ENCODE measurements at regions of chr10 and their contacts with region 1.

Region 1: GRCh38 chr10:72331601-72332422 is 22.9 kb downstream of the DNAJB12 start:
- DNase-seq: peak; percentile 67 to 78
- ATAC-seq: peak; percentile 2 to 33
- H3K4me3 ChIP-seq: peak overlapping the region in 1 of 4 donors; percentile 1
- H3K27ac ChIP-seq: peak overlapping the region; percentile 85 to 95 (median 90)
- H3K4me1 ChIP-seq: peaks cover 73 to 76% of the 10 kb centered on the region in 2 donors
- H3K27me3 ChIP-seq: no peaks in the 10 kb centered on the region
- CTCF ChIP-seq: peak in 3 of 5 experiments; percentile 28 to 38 (median 35)
- POLR2A ChIP-seq: peak; percentile 13 to 39

Region 2: DNA sequence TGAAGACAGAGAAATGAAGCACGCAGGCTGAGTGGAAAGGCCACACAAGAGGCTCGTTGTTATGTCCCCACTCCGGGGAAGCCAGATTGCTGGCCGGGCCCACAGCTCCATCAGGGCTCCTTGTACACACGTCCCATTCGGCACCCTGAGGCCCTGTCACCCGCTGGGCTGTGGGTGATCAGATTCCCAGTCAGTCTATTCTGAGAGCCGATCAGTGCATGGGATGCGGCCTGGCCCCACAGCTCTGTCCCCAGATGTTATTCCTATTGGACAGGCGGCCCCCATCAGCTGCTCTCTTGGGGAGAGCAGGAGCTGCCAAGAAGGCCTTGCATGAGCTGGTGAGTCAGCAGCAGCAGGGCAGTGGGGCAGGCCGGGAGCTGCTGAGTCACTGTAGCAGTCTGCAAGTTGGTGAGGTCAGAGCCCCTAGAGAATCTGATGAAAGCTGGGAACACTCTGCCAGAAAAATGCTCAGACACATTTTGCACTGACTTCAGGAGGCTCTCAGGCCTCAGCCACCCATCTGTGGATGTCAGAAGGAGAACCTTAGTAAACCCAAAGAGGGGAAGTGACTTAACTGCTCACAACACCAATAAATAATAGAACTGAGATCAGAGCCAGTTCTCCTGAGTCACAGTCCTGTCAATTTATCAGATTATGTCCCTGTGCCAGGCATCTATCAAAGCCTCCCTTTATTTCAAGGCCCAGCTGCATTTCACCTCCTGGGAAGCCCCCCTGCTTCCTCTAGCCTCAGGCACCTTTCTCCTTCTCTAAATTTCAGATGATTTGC is 471.4 kb before region 1 on chr10:
- in situ Hi-C with region 1: no loop called
- intact Hi-C with region 1: no loop called
- DNase-seq: peak; percentile 99 to 100
- ATAC-seq: peak; percentile 91 to 93
- H3K4me3 ChIP-seq: peak overlapping the region in 2 of 4 donors; percentile 13 to 30
- H3K27ac ChIP-seq: peak overlapping the region; percentile 89 to 99 (median 97)
- H3K4me1 ChIP-seq: peaks cover 23 to 24% of the 10 kb centered on the region in 2 donors
- H3K27me3 ChIP-seq: no peaks in the 10 kb centered on the region
- CTCF ChIP-seq: no peak
- POLR2A ChIP-seq: peak; percentile 71 to 80

Region 3: DNA sequence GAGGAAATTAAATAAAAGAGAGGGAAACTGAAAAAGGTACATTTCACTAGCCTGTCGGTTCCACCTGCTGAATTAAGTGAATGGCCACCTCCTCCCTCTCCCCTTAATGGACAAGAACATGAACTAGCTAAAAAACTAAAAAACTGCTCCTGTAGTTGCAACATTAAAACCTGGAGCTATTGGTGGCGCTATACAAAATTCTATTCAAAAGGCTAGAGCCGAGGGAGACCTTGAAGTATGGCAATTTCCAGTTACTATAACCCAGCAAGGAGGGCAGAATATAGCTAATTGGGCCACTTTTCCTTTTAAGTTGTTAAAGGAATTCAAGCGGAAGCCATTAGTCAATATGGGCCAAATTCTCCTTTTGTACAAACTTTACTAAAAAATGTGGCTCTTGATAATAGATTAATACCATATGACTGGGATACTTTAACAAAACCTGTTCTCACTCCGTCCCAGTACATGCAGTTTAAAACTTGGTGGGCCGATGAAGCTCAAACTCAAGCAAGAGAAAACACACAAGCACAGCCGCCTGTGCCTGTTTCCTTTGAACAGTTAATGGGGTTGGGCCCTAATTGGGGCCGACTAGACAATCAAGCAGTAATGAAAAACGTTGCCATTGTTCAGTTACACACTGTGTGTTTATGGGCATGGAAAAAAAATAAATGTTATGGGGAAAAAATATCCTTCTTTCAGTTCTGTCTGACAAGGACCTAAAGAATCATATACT is 374.1 kb before region 1 on chr10:
- in situ Hi-C with region 1: loop called (anchors 10 to 25 kb)
- intact Hi-C with region 1: loop called (anchors 2 kb)
- DNase-seq: no peak
- ATAC-seq: no peak
- H3K4me3 ChIP-seq: no peak overlapping the region
- H3K27ac ChIP-seq: no peak overlapping the region
- H3K4me1 ChIP-seq: peaks cover 6 to 11% of the 10 kb centered on the region in 2 donors
- H3K27me3 ChIP-seq: no peaks in the 10 kb centered on the region
- CTCF ChIP-seq: no peak
- POLR2A ChIP-seq: no peak

Region 4: GRCh38 chr10:71981015-71981875 is 350.6 kb before region 1 on chr10:
- in situ Hi-C with region 1: no loop called
- intact Hi-C with region 1: no loop called
- DNase-seq: no peak
- ATAC-seq: no peak
- H3K4me3 ChIP-seq: no peak overlapping the region
- H3K27ac ChIP-seq: peak overlapping the region; percentile 13 to 59 (median 28)
- H3K4me1 ChIP-seq: peaks cover 91 to 100% of the 10 kb centered on the region in 2 donors
- H3K27me3 ChIP-seq: no peaks in the 10 kb centered on the region
- CTCF ChIP-seq: no peak
- POLR2A ChIP-seq: no peak

Region 5: DNA sequence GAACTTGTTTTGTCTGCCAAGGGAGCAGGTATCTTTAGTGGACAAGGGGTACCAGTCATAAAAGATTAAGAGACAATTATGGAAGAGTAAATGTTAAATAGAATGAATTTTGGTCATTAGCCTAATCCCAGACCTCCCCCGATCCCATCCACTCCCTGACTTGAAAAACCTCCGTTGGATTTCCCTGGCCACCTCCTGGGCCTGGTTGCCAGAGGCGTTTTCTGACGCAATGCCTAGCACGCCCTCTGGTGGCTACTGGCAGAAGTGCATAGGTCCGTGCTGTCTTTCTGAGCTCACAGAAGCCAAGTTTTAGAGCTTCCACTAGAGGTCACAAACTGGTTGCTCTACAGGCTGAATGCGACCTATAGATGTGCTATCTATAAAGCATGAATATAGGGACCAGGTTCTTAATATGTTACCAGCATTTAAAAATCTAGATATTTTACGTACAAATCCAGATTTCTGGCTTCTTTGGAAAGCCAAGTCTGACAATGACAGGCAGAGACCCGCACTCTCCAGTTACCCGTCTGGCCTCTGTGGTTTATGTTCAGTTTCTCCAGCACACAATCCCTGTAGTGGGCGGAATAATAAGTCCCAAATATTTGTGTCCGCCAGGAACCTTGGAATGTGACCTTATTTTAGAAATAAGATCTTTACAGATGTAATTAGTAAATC is 283.2 kb before region 1 on chr10:
- in situ Hi-C with region 1: loop called in 1 of 4 experiments (anchors 5 kb)
- intact Hi-C with region 1: loop called (anchors 2 kb)
- DNase-seq: peak; percentile 83 to 90
- ATAC-seq: peak; percentile 90 to 93
- H3K4me3 ChIP-seq: no peak overlapping the region
- H3K27ac ChIP-seq: no peak overlapping the region
- H3K4me1 ChIP-seq: peaks cover 9 to 10% of the 10 kb centered on the region in 2 donors
- H3K27me3 ChIP-seq: no peaks in the 10 kb centered on the region
- CTCF ChIP-seq: peak; percentile 99 to 100 (median 100)
- POLR2A ChIP-seq: no peak

Region 6: GRCh38 chr10:72133517-72133916 is 198.3 kb before region 1 on chr10:
- in situ Hi-C with region 1: loop called (anchors 5 to 25 kb)
- intact Hi-C with region 1: no loop called
- DNase-seq: no peak
- ATAC-seq: no peak
- H3K4me3 ChIP-seq: no peak overlapping the region
- H3K27ac ChIP-seq: no peak overlapping the region
- H3K4me1 ChIP-seq: peaks cover 0 to 6% of the 10 kb centered on the region in 2 donors
- H3K27me3 ChIP-seq: no peaks in the 10 kb centered on the region
- CTCF ChIP-seq: no peak
- POLR2A ChIP-seq: no peak

Region 7: DNA sequence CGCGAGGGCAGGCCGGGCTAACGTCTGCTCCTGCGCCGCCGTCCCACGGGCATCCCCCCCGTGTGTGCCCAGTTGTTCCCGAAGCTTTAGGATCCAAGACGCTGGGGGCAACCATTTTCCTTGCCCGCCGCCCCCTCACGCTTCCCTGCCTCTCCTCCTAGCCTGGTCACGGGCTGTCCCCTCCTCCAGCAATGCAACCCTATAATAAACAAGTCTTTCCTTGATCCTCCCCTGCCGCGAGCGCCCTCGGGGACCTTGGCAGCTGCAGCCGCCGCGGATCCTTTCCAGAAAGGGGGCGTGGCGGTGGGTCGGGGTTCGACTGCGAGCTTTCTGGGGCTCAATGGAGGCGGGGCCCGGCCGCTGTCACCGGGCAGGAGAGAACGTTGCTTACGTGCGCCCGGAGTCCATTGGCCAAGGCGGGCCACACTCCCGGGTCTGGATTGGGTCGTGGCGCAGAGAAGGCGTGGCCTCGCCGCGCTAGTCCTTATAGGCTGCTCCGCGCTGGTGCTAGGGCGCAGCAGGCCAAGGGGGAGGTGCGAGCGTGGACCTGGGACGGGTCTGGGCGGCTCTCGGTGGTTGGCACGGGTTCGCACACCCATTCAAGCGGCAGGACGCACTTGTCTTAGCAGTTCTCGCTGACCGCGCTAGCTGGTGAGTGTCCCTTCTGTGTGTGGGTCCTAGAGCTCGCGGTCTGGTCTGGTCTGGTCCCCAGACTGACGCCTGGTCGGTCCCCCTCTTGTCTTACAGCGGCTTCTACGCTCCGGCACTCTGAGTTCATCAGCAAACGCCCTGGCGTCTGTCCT is 58.2 kb before region 1 on chr10 and contains the start of gene DDIT4:
- in situ Hi-C with region 1: loop called in 1 of 4 experiments (anchors 5 kb)
- intact Hi-C with region 1: loop called (anchors 1 kb)
- DNase-seq: peak; percentile 100
- ATAC-seq: peak; percentile 54 to 61
- H3K4me3 ChIP-seq: peak within 1 kb of the TSS; percentile 89 to 99 (median 96)
- H3K27ac ChIP-seq: peak within 1 kb of the TSS; percentile 97 to 100 (median 99)
- H3K4me1 ChIP-seq: peaks cover 6 to 7% of the 10 kb centered on the region in 2 donors
- H3K27me3 ChIP-seq: no peaks in the 10 kb centered on the region
- CTCF ChIP-seq: no peak
- POLR2A ChIP-seq: peak; percentile 100
- total RNA-seq, gene DDIT4: 296 to 667 (median 319) TPM

Region 8: GRCh38 chr10:72407927-72408600 is 76.3 kb after region 1 on chr10:
- in situ Hi-C with region 1: no loop called
- intact Hi-C with region 1: no loop called
- DNase-seq: no peak
- ATAC-seq: no peak
- H3K4me3 ChIP-seq: no peak overlapping the region
- H3K27ac ChIP-seq: no peak overlapping the region
- H3K4me1 ChIP-seq: no peaks in the 10 kb centered on the region
- H3K27me3 ChIP-seq: no peaks in the 10 kb centered on the region
- CTCF ChIP-seq: no peak
- POLR2A ChIP-seq: no peak

Measured in gastrocnemius medialis (tissue), 4 donors.